ENCODE measurements at regions of chr18 and their contacts with region 1.

Region 1: GRCh38 chr18:80009661-80010550 is 21.5 kb upstream of the TXNL4A start:
- DNase-seq: no peak
- H3K4me3 ChIP-seq: no peak overlapping the region
- H3K27ac ChIP-seq: no peak overlapping the region
- H3K4me1 ChIP-seq: no peaks in the 10 kb centered on the region
- H3K27me3 ChIP-seq: no peaks in the 10 kb centered on the region
- CTCF ChIP-seq: no peak
- POLR2A ChIP-seq: no peak

Region 2: DNA sequence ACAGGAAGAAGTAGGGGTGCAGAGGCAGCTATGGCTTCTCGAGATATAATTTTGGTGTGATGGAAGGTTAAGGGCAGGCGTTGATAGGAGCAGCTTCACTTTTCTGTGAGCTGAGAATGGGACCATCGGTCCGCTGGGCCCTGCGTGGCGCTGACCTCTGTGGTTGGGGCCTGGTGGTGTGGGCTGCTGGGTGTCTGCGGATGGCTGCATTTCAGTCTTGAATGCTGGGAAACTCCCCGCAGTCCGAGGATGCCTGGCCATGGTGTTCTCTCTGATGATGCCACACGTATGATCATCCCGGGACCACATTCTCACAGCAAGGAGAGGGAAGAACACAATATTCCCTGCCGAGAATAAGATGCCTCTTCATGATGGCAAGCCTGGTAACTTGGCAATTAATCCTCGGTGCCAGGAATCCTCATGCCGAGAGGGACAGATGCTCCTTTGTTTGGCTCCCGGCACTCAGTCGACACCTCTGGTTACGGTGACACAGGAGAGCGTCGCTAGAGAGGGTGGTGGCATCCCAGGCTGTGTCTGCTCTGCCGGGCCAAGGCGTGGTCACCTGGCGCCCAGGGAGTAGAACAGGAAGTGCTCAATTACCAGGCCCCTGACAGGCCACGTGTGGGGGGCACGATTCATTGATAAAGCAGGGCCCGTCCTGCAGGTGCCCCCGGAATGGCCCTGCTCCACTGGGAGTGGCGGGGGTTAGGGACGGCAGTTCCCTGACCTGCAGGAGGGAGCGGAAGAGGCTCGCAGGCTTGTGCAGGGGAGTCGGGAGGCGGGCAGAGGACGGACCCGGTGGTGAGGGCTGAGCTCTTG is 449.7 kb before region 1 on chr18:
- intact Hi-C with region 1: no loop called
- DNase-seq: no peak
- H3K4me3 ChIP-seq: no peak overlapping the region
- H3K27ac ChIP-seq: no peak overlapping the region
- H3K4me1 ChIP-seq: no peaks in the 10 kb centered on the region
- H3K27me3 ChIP-seq: peaks cover 2% of the 10 kb centered on the region
- CTCF ChIP-seq: no peak
- POLR2A ChIP-seq: no peak

Region 3: DNA sequence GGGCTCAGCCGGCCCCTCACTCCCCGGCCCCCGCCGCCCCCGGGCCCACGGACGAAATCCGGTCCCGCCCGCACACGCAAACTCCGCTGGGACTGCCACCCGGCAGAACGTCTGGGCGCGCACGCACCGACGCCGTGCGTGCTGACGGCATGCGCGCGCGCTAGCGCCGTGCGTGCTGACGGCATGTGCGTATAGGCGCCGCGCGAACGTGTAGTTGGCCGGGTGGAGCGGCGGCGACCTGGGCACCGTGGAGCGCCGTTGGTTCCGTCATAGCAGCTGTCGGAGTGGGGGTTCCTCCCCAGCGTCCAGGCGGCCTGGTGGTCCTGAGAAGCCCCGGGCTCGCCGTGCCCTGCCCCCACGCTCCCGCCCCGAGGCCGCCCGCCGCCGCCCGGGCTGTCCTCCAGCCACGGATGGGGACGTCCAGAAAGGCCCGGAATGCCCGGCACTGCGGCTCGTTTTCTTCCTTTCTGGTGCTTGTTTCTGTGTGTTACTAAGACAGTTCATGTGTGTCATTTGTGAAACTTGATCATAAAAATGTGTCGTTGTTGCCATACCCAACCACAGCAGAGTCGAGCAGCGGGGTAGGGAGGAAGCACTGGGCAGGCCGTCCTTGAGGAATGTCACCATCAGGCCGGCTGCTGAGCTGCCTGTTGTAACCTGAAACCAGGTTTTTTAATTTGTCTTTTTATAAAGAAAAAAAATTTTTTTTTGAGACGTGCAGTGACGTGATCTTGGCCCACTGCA is 21.3 kb before region 1 on chr18 and contains the start of gene TXNL4A:
- intact Hi-C with region 1: loop called (anchors 2 kb)
- DNase-seq: peak; percentile 75
- H3K4me3 ChIP-seq: peak within 1 kb of the TSS; percentile 80 to 90
- H3K27ac ChIP-seq: peak within 1 kb of the TSS; percentile 91 to 96
- H3K4me1 ChIP-seq: no peaks in the 10 kb centered on the region
- H3K27me3 ChIP-seq: no peaks in the 10 kb centered on the region
- CTCF ChIP-seq: peak in 2 of 4 experiments; percentile 4 to 15
- POLR2A ChIP-seq: peak; percentile 66
- total RNA-seq, gene TXNL4A: 25.4 to 35.2 TPM

Region 4: GRCh38 chr18:80229363-80230127 is 219.6 kb after region 1 on chr18:
- intact Hi-C with region 1: no loop called
- DNase-seq: no peak
- H3K4me3 ChIP-seq: no peak overlapping the region
- H3K27ac ChIP-seq: no peak overlapping the region
- H3K4me1 ChIP-seq: no peaks in the 10 kb centered on the region
- H3K27me3 ChIP-seq: no peaks in the 10 kb centered on the region
- CTCF ChIP-seq: no peak
- POLR2A ChIP-seq: no peak